CD8-positive, alpha-beta T cell (primary cell): ENCODE measurements at regions of chr2 and their contacts with region 1.

Region 1: DNA sequence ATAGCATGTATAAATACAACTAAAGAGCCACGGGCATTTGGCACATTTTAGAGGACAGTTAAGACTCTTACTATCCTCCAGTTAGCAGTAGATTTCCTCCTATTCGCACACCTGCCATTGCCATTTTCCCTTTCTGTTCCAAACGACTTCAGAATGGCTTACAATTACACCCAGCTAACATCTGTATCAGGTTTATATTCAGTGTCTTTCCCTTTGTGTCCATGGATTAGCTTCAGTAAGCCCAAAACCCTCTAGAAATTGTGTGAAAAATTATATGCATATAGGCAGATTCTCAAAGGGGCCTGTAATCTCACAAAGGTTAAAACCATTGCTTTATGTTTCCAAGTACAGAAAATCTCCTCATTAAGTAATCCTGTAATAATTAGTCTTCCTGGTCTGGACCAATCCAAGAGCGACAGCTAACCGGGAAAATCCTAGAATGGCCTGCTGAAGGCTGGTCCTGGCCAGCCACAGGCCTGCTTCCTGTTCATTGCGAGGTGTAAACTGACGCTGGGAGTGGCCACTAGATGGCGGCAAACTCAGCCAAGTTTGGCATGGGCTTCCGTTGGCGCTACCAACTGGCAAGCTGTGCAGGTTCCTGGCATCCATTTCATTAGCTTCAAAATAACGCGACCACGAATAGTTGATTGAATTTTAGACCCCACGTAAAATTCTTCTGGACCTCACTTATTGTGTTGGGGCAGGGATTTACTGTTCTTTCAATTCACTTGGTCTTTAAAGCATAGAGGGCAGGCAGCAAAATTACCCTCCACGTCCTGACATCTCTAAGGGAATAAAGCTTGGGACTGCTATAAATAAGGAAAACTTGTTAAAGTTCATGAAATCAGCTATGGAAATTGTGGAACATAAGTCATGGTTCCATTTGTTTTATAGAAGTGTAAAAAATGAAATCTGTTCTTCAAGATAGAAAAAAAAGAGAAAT is 17.1 kb downstream of the ARHGAP25 start:
- DNase-seq: peak; percentile 81 to 96 (median 93)
- ATAC-seq: peak; percentile 93
- H3K4me3 ChIP-seq: no peak overlapping the region
- H3K4me3 Mint-ChIP-seq: peak overlapping the region; percentile 61
- H3K27ac ChIP-seq: peak overlapping the region; percentile 16 to 70
- H3K27ac Mint-ChIP-seq: peak overlapping the region; percentile 87
- H3K4me1 ChIP-seq: peaks cover 70% of the 10 kb centered on the region
- H3K4me1 Mint-ChIP-seq: peaks cover 86% of the 10 kb centered on the region
- H3K27me3 ChIP-seq: no peaks in the 10 kb centered on the region
- H3K27me3 Mint-ChIP-seq: no peaks in the 10 kb centered on the region
- CTCF ChIP-seq: peak; percentile 84

Region 2: DNA sequence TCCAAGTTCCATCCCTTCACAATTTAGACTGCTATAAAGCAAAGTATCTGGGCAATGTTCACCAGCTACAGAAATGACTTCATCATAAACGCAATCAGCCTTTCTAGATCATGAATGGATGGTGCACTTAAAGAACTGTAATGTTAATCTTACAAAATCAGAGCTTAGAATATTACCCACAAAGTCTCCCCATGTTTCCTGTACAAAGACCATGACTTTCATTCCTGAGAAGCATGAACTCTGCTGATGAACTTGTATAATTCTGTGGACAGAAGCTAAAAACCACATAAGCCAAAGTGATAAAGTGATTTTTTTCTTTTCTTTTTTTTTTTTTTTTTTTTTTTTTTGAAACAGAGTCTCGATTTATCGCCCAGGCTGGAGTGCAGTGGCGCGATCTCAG is 742.1 kb before region 1 on chr2:
- CTCF ChIA-PET with region 1: no interaction called
- POLR2A ChIA-PET with region 1: no interaction called
- intact Hi-C with region 1: no loop called
- DNase-seq: no peak
- ATAC-seq: no peak
- H3K4me3 ChIP-seq: no peak overlapping the region
- H3K4me3 Mint-ChIP-seq: no peak overlapping the region
- H3K27ac ChIP-seq: no peak overlapping the region
- H3K27ac Mint-ChIP-seq: no peak overlapping the region
- H3K4me1 ChIP-seq: no peaks in the 10 kb centered on the region
- H3K4me1 Mint-ChIP-seq: no peaks in the 10 kb centered on the region
- H3K27me3 ChIP-seq: no peaks in the 10 kb centered on the region
- H3K27me3 Mint-ChIP-seq: peaks cover 11% of the 10 kb centered on the region
- CTCF ChIP-seq: no peak

Region 3: GRCh38 chr2:68709421-68709911 is 42.2 kb before region 1 on chr2:
- CTCF ChIA-PET with region 1: interaction called, 60 read pairs
- POLR2A ChIA-PET with region 1: no interaction called
- intact Hi-C with region 1: loop called (anchors 1 to 2 kb)
- DNase-seq: peak in 2 of 9 experiments; percentile 50 to 62
- ATAC-seq: peak; percentile 58
- H3K4me3 ChIP-seq: no peak overlapping the region
- H3K4me3 Mint-ChIP-seq: no peak overlapping the region
- H3K27ac ChIP-seq: no peak overlapping the region
- H3K27ac Mint-ChIP-seq: no peak overlapping the region
- H3K4me1 ChIP-seq: no peaks in the 10 kb centered on the region
- H3K4me1 Mint-ChIP-seq: peaks cover 8% of the 10 kb centered on the region
- H3K27me3 ChIP-seq: no peaks in the 10 kb centered on the region
- H3K27me3 Mint-ChIP-seq: no peaks in the 10 kb centered on the region
- CTCF ChIP-seq: peak; percentile 76

Region 4: DNA sequence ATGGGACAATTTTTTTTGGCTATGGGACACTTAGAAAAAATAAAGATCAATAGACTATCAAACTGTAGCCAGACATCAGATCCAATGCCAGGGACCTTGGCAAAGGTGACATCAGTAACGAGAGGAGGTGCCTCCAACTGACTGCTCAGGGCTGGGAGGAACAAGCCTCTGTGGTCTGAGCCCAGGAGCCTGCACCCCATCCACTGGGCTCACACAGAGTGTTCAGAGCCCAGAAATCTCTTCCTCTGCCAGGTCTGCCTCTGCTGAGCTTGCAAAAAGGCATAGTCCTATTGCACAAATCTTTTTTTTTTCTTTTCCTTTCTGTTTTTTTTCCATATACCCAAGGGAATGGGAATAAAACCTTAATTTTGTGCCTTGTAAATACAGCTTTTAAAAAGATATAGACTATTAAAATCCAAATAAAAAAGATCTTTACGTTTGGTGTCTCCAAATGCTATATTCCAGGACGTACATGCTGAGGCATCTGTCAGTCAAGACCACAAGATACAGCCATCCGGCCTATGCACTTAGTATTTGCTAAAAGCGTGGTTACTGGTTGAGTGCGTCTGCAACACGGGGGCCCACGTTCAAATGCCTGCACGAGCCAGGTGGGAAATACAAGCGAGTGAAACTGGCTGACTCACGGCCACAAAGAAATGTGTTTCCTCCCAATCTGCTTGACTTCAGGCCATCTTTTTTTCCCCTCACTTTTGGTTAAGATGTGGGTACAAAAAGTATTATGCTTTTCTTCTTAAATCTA is 24.9 kb before region 1 on chr2:
- CTCF ChIA-PET with region 1: interaction called, 32 read pairs
- POLR2A ChIA-PET with region 1: interaction called, 3 read pairs
- intact Hi-C with region 1: no loop called
- DNase-seq: peak; percentile 48 to 92 (median 81)
- ATAC-seq: peak; percentile 98
- H3K4me3 ChIP-seq: no peak overlapping the region
- H3K4me3 Mint-ChIP-seq: peak overlapping the region; percentile 22
- H3K27ac ChIP-seq: peak overlapping the region in 1 of 2 experiments; percentile 60
- H3K27ac Mint-ChIP-seq: peak overlapping the region; percentile 82
- H3K4me1 ChIP-seq: peaks cover 37% of the 10 kb centered on the region
- H3K4me1 Mint-ChIP-seq: peaks cover 54% of the 10 kb centered on the region
- H3K27me3 ChIP-seq: no peaks in the 10 kb centered on the region
- H3K27me3 Mint-ChIP-seq: no peaks in the 10 kb centered on the region
- CTCF ChIP-seq: no peak

Region 5: GRCh38 chr2:68774569-68775271 is 23.1 kb after region 1 on chr2:
- CTCF ChIA-PET with region 1: interaction called, 94 read pairs
- POLR2A ChIA-PET with region 1: interaction called, 39 read pairs
- intact Hi-C with region 1: loop called in 1 of 2 experiments (anchors 1 kb)
- DNase-seq: peak; percentile 15 to 84 (median 58)
- ATAC-seq: peak; percentile 38
- H3K4me3 ChIP-seq: peak overlapping the region; percentile 61 to 85
- H3K4me3 Mint-ChIP-seq: peak overlapping the region; percentile 84
- H3K27ac ChIP-seq: peak overlapping the region; percentile 64 to 88
- H3K27ac Mint-ChIP-seq: peak overlapping the region; percentile 100
- H3K4me1 ChIP-seq: peaks cover 81% of the 10 kb centered on the region
- H3K4me1 Mint-ChIP-seq: peaks cover 89% of the 10 kb centered on the region
- H3K27me3 ChIP-seq: no peaks in the 10 kb centered on the region
- H3K27me3 Mint-ChIP-seq: no peaks in the 10 kb centered on the region
- CTCF ChIP-seq: no peak

Region 6: GRCh38 chr2:68799140-68800026 is 47.7 kb after region 1 on chr2:
- CTCF ChIA-PET with region 1: interaction called, 14 read pairs
- POLR2A ChIA-PET with region 1: interaction called, 3 read pairs
- intact Hi-C with region 1: loop called (anchors 2 to 5 kb)
- DNase-seq: no peak
- ATAC-seq: no peak
- H3K4me3 ChIP-seq: no peak overlapping the region
- H3K4me3 Mint-ChIP-seq: no peak overlapping the region
- H3K27ac ChIP-seq: peak overlapping the region in 1 of 2 experiments; percentile 51
- H3K27ac Mint-ChIP-seq: peak overlapping the region; percentile 90
- H3K4me1 ChIP-seq: peaks cover 40% of the 10 kb centered on the region
- H3K4me1 Mint-ChIP-seq: peaks cover 64% of the 10 kb centered on the region
- H3K27me3 ChIP-seq: no peaks in the 10 kb centered on the region
- H3K27me3 Mint-ChIP-seq: no peaks in the 10 kb centered on the region
- CTCF ChIP-seq: no peak

Region 7: GRCh38 chr2:68837164-68837860 is 85.6 kb after region 1 on chr2:
- CTCF ChIA-PET with region 1: interaction called, 127 read pairs
- POLR2A ChIA-PET with region 1: interaction called, 3 read pairs
- intact Hi-C with region 1: loop called (anchors 1 kb)
- DNase-seq: peak; percentile 39 to 83 (median 73)
- ATAC-seq: peak; percentile 74
- H3K4me3 ChIP-seq: no peak overlapping the region
- H3K4me3 Mint-ChIP-seq: no peak overlapping the region
- H3K27ac ChIP-seq: no peak overlapping the region
- H3K27ac Mint-ChIP-seq: no peak overlapping the region
- H3K4me1 ChIP-seq: peaks cover 8% of the 10 kb centered on the region
- H3K4me1 Mint-ChIP-seq: peaks cover 23% of the 10 kb centered on the region
- H3K27me3 ChIP-seq: no peaks in the 10 kb centered on the region
- H3K27me3 Mint-ChIP-seq: no peaks in the 10 kb centered on the region
- CTCF ChIP-seq: peak; percentile 82

Region 8: DNA sequence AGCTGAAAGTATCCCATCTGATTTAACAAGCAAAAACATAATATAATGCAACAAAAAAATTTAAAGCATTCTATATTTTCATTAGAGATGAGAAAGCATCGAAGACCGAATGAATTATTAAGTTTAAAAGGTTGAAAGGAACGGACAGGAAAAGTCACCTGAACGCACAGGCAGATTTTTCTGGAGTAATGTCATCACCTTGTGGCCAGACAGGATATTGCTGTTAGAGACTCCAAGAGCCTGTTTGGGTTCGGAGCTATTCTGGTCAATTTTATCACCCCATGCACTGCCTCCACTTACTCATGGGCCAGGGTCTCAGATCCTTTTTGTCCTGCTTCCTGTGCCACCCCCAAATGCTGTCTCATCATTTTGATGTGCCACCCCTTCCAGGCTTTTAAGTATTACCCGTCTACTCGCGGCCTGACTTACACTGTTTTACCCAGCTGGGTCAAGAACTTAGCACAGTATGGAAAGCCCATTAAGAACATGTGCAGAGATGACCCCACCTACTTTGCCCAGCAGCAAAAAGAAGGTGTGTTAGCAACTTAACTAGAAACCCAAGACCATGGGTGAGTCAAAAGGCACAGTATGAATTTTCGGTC is 173.7 kb after region 1 on chr2:
- CTCF ChIA-PET with region 1: interaction called, 72 read pairs
- POLR2A ChIA-PET with region 1: no interaction called
- intact Hi-C with region 1: loop called (anchors 1 kb)
- DNase-seq: peak; percentile 18 to 80 (median 56)
- ATAC-seq: peak; percentile 87
- H3K4me3 ChIP-seq: no peak overlapping the region
- H3K4me3 Mint-ChIP-seq: no peak overlapping the region
- H3K27ac ChIP-seq: no peak overlapping the region
- H3K27ac Mint-ChIP-seq: no peak overlapping the region
- H3K4me1 ChIP-seq: no peaks in the 10 kb centered on the region
- H3K4me1 Mint-ChIP-seq: no peaks in the 10 kb centered on the region
- H3K27me3 ChIP-seq: no peaks in the 10 kb centered on the region
- H3K27me3 Mint-ChIP-seq: peaks cover 2% of the 10 kb centered on the region
- CTCF ChIP-seq: peak; percentile 98